ENCODE measurements at regions of chr3 and their contacts with region 1.

Region 1: DNA sequence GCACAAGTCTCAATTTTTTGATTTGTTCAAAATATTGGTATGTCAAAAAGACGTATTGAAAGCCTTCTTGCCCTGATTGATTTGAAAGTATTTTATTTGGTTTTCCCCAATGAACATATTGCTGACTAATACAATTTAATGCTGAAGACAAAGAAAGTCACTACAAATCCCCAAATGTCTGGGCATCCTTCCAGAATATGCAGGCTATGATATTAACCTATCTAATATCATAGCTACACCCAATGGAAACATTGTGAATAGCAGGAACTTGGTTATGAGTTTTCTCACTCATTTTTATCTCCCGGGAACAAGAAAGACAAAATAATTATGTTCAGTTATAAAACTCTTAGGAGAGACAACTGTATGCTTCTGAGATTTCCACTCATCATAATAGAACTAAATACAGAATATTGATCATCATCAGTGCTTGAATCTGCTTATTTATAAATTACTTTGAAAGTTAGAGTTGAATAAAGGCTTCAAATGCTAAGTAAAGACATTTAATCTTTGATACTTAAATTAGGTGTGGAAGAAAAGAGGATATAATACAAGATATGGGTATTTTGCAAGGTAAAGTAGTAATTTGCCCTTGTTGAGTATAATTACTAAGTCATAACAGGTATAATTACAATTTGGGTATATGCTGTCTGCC is 483.9 kb downstream of the RBMS3 start:
- DNase-seq: peak in 1 of 2 experiments; percentile 7
- H3K4me3 ChIP-seq: no peak overlapping the region
- H3K4me3 Mint-ChIP-seq: no peak overlapping the region
- H3K27ac Mint-ChIP-seq: no peak overlapping the region
- H3K4me1 ChIP-seq: no peaks in the 10 kb centered on the region
- H3K4me1 Mint-ChIP-seq: no peaks in the 10 kb centered on the region
- H3K27me3 ChIP-seq: no peaks in the 10 kb centered on the region
- H3K27me3 Mint-ChIP-seq: no peaks in the 10 kb centered on the region
- CTCF ChIP-seq: peak; percentile 22 to 36

Region 2: DNA sequence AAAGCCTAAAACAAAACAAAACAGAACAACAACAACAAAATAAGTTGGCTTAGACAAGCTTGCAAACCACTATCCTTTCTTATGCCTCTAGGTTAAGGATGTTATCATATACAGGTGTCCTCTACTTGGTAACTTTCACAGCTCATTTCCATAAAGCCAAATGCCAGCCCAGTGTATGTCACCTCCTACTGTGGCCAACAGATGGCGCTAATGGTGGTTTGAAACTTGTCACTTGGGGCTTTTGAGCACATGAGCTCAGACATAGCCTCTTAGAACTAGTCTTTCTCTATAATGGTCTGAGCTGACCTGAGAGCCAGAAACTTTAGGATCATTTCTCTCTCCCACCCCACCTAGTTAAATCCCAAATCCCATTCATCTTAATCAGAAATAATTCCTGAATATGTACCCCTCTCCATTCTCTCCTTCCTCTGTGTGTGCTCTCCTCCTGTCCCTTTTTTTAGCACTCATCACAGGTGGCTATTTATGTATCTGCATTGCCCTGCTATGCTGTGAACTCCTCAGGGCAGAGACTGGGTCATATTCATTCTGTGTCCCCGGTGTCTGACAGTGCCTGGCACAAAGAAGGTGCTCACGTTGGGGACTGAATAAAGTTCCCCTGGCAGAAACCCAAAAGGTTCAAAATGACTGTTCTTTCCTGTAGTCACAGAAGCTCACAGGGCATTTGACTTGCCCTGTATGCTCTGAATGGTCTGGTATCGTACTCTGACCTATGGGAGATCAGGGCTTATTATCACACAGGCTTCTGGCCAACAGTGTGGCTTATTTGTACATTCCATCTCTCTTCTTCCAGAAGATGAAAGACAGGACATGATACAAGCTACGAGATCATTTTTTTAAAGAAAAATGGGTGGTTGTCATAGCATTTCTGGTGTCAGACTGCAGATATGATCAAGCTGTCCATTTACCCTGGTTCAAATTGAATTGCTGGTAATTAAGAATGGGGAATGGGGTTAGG is 1096.8 kb before region 1 on chr3:
- CTCF ChIA-PET with region 1: no interaction called
- POLR2A ChIA-PET with region 1: no interaction called
- intact Hi-C with region 1: loop called (anchors 1 kb)
- DNase-seq: peak; percentile 57 to 65
- H3K4me3 ChIP-seq: no peak overlapping the region
- H3K4me3 Mint-ChIP-seq: no peak overlapping the region
- H3K27ac Mint-ChIP-seq: no peak overlapping the region
- H3K4me1 ChIP-seq: 0 out of 2 replicates have a peak, but pooled peaks cover 6% of the 10 kb centered on the region
- H3K4me1 Mint-ChIP-seq: no peaks in the 10 kb centered on the region
- H3K27me3 ChIP-seq: no peaks in the 10 kb centered on the region
- H3K27me3 Mint-ChIP-seq: peaks cover 9% of the 10 kb centered on the region
- CTCF ChIP-seq: peak; percentile 61 to 70

Region 3: GRCh38 chr3:29335438-29335837 is 429.3 kb before region 1 on chr3:
- CTCF ChIA-PET with region 1: no interaction called
- POLR2A ChIA-PET with region 1: no interaction called
- intact Hi-C with region 1: no loop called
- DNase-seq: no peak
- H3K4me3 ChIP-seq: no peak overlapping the region
- H3K4me3 Mint-ChIP-seq: no peak overlapping the region
- H3K27ac Mint-ChIP-seq: no peak overlapping the region
- H3K4me1 ChIP-seq: no peaks in the 10 kb centered on the region
- H3K4me1 Mint-ChIP-seq: peaks cover 13% of the 10 kb centered on the region
- H3K27me3 ChIP-seq: no peaks in the 10 kb centered on the region
- H3K27me3 Mint-ChIP-seq: no peaks in the 10 kb centered on the region
- CTCF ChIP-seq: no peak

Region 4: DNA sequence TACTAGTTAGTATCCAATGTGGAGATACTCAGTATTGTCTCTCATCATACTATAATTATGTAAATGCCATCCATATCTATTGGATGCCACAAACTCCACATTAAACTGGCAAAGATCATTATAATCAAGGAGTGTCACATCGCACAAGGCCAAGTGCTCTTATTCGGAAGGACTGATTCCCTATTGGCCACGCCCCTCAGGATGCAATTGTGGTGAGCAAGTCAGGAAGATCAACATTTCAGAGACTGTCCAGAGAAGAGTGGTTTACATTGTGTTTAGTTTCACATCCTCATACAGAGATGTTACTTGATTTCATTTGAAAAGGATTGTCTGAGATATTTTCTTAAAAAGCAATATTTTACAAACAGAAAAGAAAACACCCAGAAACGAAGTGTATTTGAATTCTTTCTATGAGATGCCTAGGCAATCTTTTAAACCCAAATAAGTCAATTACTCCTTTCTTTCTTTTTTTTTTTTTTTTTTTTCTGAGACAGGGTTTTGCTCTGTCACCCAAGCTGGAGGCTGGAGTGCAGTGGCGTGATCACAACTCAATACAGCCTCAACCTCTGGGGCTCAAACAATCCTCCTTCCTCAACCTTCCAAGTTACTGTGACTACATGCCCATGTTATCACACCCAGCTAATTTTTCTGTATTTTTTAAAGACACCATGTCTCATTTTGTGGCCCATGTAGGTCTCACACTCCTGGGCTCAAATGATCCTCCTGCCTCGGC is 114.7 kb before region 1 on chr3:
- CTCF ChIA-PET with region 1: no interaction called
- POLR2A ChIA-PET with region 1: no interaction called
- intact Hi-C with region 1: no loop called
- DNase-seq: no peak
- H3K4me3 ChIP-seq: no peak overlapping the region
- H3K4me3 Mint-ChIP-seq: no peak overlapping the region
- H3K27ac Mint-ChIP-seq: no peak overlapping the region
- H3K4me1 ChIP-seq: no peaks in the 10 kb centered on the region
- H3K4me1 Mint-ChIP-seq: no peaks in the 10 kb centered on the region
- H3K27me3 ChIP-seq: no peaks in the 10 kb centered on the region
- H3K27me3 Mint-ChIP-seq: no peaks in the 10 kb centered on the region
- CTCF ChIP-seq: no peak

Region 5: DNA sequence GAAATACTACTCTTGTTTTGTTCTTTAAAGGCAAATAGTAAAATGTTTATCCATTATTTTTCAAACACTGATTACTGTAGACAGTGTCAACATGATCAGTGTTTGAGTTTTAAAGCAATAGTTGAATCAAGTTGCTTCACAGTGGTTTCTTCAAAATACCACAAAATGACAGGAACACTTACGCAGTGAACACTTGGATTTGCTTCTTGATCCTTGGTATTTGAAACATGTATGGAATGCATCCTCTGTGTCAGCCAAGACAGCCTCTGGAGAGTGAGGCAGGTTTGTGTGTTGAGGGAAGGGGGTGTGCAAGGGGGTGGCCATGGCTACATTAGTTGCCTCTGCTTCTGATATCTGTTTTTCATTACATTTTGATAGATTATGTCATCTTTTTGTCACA is 70.9 kb before region 1 on chr3:
- CTCF ChIA-PET with region 1: no interaction called
- POLR2A ChIA-PET with region 1: interaction called, 3 read pairs
- intact Hi-C with region 1: loop called (anchors 5 kb)
- DNase-seq: peak; percentile 62 to 80
- H3K4me3 ChIP-seq: no peak overlapping the region
- H3K4me3 Mint-ChIP-seq: no peak overlapping the region
- H3K27ac Mint-ChIP-seq: peak overlapping the region; percentile 90
- H3K4me1 ChIP-seq: peaks cover 54% of the 10 kb centered on the region
- H3K4me1 Mint-ChIP-seq: peaks cover 20% of the 10 kb centered on the region
- H3K27me3 ChIP-seq: no peaks in the 10 kb centered on the region
- H3K27me3 Mint-ChIP-seq: no peaks in the 10 kb centered on the region
- CTCF ChIP-seq: no peak

Measured in Caco-2 (cell line).